RWPE1 (cell line): ENCODE measurements at regions of chr12 and their contacts with region 1.

Region 1: DNA sequence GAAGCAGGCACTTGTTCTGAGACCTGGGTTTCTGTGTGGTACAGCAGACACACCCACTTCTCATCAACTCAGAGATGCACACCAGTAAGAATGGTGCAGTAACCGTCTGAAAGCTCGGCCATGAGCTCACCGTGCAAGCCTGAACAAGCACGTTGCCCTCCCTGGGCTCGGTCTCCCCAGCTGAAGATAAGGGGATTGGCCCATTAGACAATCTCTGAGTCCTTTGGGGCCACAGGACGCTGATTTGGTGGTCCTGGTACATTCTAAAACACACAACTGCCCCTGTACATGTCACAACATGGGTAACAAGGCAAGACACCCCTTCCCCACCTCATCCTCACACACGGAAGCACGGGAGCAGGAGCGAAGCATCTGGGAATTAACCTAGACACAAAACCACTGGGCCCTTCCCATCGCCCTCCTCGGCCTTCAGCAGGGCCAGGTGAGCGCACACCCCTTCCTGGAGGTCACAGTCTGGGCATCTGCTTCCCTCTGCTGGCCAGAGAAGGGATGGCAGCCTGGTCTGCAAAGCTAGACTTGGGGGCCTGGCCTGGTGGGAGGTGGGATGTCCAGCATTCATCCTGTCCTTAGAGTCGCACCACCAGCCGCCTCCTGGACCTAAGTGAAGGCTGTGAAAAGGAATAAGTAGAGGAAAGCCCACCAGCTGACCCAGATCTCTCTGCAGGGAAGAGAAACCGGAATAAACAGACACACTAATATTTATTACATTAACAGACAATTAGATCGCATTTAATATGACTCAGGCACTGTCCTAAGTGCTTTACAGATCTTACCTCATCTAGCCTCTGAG is 18.9 kb upstream of the SMUG1 start:
- DNase-seq: peak; percentile 72
- H3K27ac ChIP-seq: no peak overlapping the region
- CTCF ChIP-seq: peak; percentile 96

Region 2: DNA sequence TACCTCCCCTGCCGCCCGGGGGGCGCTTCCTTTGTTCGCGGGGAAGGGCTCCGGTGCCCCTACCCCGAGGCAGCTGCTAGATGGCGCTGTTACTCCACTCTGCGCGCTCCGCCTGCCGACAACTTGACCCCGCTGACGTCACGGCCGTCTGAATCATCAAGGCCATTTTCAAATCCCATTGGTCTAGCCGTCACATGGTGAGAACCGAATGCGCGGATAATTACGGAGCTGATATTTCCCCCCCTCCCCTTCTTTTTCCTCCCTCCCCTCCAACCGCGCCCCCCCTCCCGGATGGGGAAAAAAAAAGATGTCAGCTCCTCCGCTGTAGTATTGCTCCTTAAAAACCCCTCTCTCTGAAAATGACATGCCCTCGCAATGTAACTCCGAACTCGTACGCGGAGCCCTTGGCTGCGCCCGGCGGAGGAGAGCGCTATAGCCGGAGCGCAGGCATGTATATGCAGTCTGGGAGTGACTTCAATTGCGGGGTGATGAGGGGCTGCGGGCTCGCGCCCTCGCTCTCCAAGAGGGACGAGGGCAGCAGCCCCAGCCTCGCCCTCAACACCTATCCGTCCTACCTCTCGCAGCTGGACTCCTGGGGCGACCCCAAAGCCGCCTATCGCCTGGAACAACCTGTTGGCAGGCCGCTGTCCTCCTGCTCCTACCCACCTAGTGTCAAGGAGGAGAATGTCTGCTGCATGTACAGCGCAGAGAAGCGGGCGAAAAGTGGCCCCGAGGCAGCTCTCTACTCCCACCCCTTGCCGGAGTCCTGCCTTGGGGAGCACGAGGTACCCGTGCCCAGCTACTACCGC is 222.6 kb before region 1 on chr12 and contains the start of gene HOXC10:
- CTCF ChIA-PET with region 1: interaction called, 25 read pairs
- POLR2A ChIA-PET with region 1: no interaction called
- DNase-seq: peak; percentile 93
- H3K27ac ChIP-seq: no peak within 1 kb of the TSS
- CTCF ChIP-seq: peak; percentile 69

Region 3: GRCh38 chr12:53995378-53996239 is 212.1 kb before region 1 on chr12:
- CTCF ChIA-PET with region 1: interaction called, 15 read pairs
- POLR2A ChIA-PET with region 1: no interaction called
- DNase-seq: peak; percentile 57
- H3K27ac ChIP-seq: peak overlapping the region; percentile 52
- CTCF ChIP-seq: no peak

Region 4: GRCh38 chr12:54005853-54006686 is 201.6 kb before region 1 on chr12:
- CTCF ChIA-PET with region 1: interaction called, 47 read pairs
- POLR2A ChIA-PET with region 1: no interaction called
- DNase-seq: peak; percentile 81
- H3K27ac ChIP-seq: no peak overlapping the region
- CTCF ChIP-seq: peak; percentile 85

Region 5: DNA sequence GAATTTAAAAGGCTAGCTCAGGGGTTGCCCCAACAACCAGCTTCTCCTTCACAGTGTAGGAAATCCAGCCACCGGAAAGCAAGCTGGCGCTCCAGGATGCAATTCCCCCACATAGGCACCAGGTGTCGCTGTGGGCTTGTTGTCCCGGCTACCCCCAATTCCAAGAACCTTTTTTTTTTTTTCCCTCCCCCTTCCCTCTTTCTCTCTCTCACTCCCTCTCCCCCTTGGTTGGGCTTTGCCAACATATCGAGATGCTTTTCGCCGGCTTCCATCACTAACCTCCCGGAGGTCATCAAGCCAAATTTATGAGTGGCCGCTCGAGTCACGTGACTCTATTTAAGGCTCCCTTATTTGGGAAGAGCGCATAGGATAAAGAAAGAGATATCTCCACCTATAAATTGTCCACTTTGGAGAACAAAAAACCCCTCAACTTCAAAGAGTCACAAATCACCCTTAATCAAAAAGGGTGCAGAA is 175.0 kb before region 1 on chr12 and contains the start of gene HOXC5:
- CTCF ChIA-PET with region 1: interaction called, 14 read pairs
- POLR2A ChIA-PET with region 1: no interaction called
- DNase-seq: peak; percentile 82
- H3K27ac ChIP-seq: no peak within 1 kb of the TSS
- CTCF ChIP-seq: peak; percentile 92

Region 6: GRCh38 chr12:54159140-54159539 is 48.5 kb before region 1 on chr12:
- CTCF ChIA-PET with region 1: no interaction called
- POLR2A ChIA-PET with region 1: no interaction called
- DNase-seq: peak; percentile 21
- H3K27ac ChIP-seq: no peak overlapping the region
- CTCF ChIP-seq: no peak

Region 7: DNA sequence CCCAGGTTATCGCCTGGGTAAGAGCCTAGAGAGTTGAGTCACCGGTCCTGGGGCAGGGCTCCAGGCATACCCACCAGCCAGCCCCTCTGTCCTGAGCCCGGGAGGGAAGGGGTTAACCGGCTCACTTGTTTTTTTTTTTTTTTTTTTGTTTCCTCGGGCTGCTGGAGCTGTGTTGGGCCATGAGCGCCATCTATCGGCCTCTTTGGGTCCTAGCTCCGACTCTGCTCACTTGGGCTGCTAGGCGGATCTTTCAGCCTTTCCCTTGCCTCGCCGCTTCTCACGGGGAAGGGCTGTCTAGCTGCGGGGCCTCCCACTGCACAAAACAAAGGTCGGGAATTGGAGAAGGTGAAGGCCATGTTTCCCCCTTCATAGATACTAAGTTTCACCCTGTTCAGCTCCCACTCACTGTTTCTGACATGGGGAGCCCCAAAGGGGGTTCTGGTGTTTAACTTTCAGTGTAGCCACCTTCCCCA is 16.1 kb before region 1 on chr12:
- CTCF ChIA-PET with region 1: interaction called, 10 read pairs
- POLR2A ChIA-PET with region 1: no interaction called
- DNase-seq: peak; percentile 86
- H3K27ac ChIP-seq: no peak overlapping the region
- CTCF ChIP-seq: peak; percentile 85